OCI-LY7 (cell line): ENCODE measurements at regions of chr16 and their contacts with region 1.

Region 1: DNA sequence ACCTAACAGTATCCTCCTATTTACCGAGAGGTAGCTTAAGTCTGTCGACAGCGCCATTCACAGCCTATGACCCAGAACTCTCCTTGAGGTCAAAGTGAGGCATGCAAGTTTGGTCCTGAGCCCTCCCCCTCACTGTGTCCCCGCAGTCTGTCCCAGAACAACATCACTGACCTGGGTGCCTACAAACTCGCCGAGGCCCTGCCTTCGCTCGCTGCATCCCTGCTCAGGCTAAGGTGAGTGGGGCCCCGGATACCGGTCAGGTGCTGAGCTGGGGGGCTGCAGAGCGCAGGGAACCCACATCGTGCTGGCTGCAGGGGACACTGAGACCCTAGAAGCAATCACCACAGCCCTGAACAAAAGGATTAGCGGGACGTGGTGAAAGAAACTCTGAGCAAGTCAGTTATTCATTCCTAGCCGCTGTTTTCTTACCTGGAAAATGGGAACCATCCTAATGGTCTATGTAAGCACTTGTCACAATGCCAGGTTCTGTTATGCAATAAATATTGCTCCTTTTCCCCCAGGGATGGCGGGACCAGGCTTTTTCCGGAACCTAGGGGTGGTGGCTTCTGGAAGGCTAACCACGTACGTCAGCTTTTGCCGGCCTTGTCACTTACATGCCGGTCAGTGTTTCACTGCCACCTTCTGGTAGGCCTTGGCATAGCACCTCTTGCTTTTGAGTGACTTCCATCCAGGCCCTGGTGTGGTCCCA is 23.8 kb downstream of the DEXI start:
- DNase-seq: peak; percentile 87
- H3K4me3 ChIP-seq: no peak overlapping the region
- H3K27ac ChIP-seq: no peak overlapping the region
- H3K4me1 ChIP-seq: peaks cover 6% of the 10 kb centered on the region
- CTCF ChIP-seq: peak; percentile 97

Region 2: GRCh38 chr16:10521681-10522274 is 396.7 kb before region 1 on chr16:
- CTCF ChIA-PET with region 1: no interaction called
- POLR2A ChIA-PET with region 1: no interaction called
- intact Hi-C with region 1: loop called (anchors 2 kb)
- DNase-seq: peak; percentile 70
- H3K4me3 ChIP-seq: no peak overlapping the region
- H3K27ac ChIP-seq: no peak overlapping the region
- H3K4me1 ChIP-seq: no peaks in the 10 kb centered on the region
- CTCF ChIP-seq: peak; percentile 91

Region 3: DNA sequence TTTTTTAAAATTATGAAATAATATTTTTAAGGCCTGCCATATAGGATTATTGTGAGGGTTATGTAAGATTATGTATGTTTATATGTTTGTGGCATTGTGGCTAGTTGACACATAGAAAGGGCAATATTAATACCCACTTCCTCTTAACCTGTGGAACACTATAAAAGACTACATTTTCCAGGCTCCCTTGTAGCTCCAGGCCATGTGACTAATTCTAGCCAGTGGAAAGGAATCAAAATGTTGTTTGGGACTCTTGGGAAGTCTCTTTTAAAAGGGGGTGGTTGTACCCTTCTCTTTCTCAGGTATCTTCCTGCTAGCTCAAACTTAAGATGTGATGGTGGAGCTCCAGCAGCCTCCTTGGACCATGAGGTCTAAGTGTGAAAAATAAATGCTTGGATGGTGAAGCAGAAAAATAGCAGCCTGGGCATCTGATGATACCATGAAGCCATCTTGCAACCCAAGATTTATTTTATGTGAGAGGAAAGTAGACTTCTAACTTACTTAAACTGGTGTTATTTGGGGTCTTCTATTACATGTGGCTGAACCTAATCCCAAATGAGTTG is 263.0 kb before region 1 on chr16:
- CTCF ChIA-PET with region 1: no interaction called
- POLR2A ChIA-PET with region 1: no interaction called
- intact Hi-C with region 1: loop called (anchors 5 kb)
- DNase-seq: no peak
- H3K4me3 ChIP-seq: no peak overlapping the region
- H3K27ac ChIP-seq: no peak overlapping the region
- H3K4me1 ChIP-seq: no peaks in the 10 kb centered on the region
- CTCF ChIP-seq: no peak

Region 4: DNA sequence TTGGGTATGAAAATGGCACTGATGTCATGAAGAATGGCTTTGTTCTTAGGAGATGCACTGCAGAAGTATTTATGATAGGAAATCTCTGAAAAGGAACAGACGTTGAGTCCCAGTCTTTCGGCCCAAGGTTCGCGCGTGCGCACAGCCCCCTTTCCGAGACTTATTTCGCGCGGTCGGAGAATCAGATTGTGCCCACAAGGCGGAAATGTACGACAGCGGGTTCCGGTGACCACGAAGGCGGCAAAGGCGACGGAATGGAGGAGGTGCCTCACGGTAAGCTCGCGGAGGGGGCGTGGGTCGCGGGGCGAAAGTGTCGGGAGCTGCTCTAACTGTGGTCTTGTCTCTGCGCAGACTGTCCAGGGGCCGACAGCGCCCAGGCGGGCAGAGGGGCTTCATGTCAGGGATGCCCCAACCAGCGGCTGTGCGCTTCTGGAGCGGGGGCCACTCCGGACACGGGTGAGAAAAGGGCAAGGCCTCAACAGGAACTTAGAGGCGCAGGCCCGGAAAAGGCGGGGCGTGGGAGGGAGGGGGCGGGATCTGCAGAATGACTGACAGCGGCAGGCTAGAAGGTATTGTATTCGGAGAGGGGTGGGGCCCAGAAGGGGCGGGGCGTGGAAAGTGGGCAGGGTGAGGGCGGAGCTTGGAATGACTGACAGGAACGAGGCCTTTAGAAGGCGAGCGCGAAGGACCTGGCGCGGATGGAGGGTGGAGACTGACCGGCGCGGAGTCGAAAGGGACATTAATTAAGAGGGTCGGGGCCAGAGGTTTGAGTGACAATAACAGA is 174.6 kb before region 1 on chr16 and contains the start of gene NUBP1:
- CTCF ChIA-PET with region 1: interaction called, 4 read pairs
- POLR2A ChIA-PET with region 1: interaction called, 4 read pairs
- intact Hi-C with region 1: loop called (anchors 2 kb)
- DNase-seq: peak; percentile 95
- H3K4me3 ChIP-seq: peak within 1 kb of the TSS; percentile 70
- H3K27ac ChIP-seq: peak within 1 kb of the TSS; percentile 75
- H3K4me1 ChIP-seq: peaks cover 32% of the 10 kb centered on the region
- CTCF ChIP-seq: no peak
- total RNA-seq, gene NUBP1: 15.1 and 27.4 TPM in 2 replicates